WTC11 (cell line): ENCODE measurements at regions of chr18 and their contacts with region 1.

Region 1: GRCh38 chr18:7566567-7567473 is at the start of gene PTPRM:
- DNase-seq: peak; percentile 67
- ATAC-seq: peak; percentile 81
- H3K4me3 Mint-ChIP-seq: peak within 1 kb of the TSS; percentile 71
- H3K27ac Mint-ChIP-seq: no peak within 1 kb of the TSS
- H3K4me1 Mint-ChIP-seq: peaks cover 14% of the 10 kb centered on the region
- H3K27me3 Mint-ChIP-seq: peaks cover 41% of the 10 kb centered on the region
- CTCF ChIP-seq: peak; percentile 18; the same call in 1 of the 2 replicates
- total RNA-seq, gene PTPRM: 8.6 to 11.1 TPM (median 9.2 TPM) in 3 replicates

Region 2: GRCh38 chr18:7369006-7369405 is 197.8 kb before region 1 on chr18:
- CTCF ChIA-PET with region 1: interaction called, 17 read pairs
- POLR2A ChIA-PET with region 1: no interaction called
- DNase-seq: no peak
- ATAC-seq: no peak
- H3K4me3 Mint-ChIP-seq: no peak overlapping the region
- H3K27ac Mint-ChIP-seq: no peak overlapping the region
- H3K4me1 Mint-ChIP-seq: 0 out of 2 replicates have a peak, but pooled peaks cover 2% of the 10 kb centered on the region
- H3K27me3 Mint-ChIP-seq: no peaks in the 10 kb centered on the region
- CTCF ChIP-seq: no peak

Region 3: DNA sequence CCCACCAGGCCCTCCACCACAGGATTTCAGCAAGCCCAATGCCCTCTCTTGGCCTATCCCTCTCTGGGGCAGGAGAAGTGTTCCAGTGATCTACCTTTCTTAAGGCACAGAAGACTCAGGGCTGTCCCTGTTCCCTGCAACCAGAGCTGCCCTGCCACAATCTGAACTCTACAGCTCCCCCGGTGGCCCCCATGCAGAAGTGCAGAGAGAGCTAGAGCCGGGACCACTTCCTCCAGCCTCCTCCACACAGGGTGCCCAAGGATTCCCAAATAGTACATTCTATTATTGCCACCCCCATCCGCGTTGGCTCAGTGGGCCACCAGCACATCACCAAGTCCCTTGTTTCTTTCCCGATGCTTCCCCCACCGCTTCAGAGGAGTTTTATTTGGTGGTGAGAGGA is 114.5 kb before region 1 on chr18:
- CTCF ChIA-PET with region 1: interaction called, 13 read pairs
- POLR2A ChIA-PET with region 1: no interaction called
- DNase-seq: peak; percentile 61
- ATAC-seq: peak; percentile 100
- H3K4me3 Mint-ChIP-seq: no peak overlapping the region
- H3K27ac Mint-ChIP-seq: no peak overlapping the region
- H3K4me1 Mint-ChIP-seq: no peaks in the 10 kb centered on the region
- H3K27me3 Mint-ChIP-seq: no peaks in the 10 kb centered on the region; the same call in 1 of the 2 replicates
- CTCF ChIP-seq: peak; percentile 67

Region 4: GRCh38 chr18:7459851-7460770 is 106.7 kb before region 1 on chr18:
- CTCF ChIA-PET with region 1: interaction called, 10 read pairs
- POLR2A ChIA-PET with region 1: no interaction called
- DNase-seq: no peak
- ATAC-seq: peak; percentile 50
- H3K4me3 Mint-ChIP-seq: no peak overlapping the region
- H3K27ac Mint-ChIP-seq: no peak overlapping the region
- H3K4me1 Mint-ChIP-seq: peaks cover 14% of the 10 kb centered on the region
- H3K27me3 Mint-ChIP-seq: no peaks in the 10 kb centered on the region
- CTCF ChIP-seq: no peak

Region 5: DNA sequence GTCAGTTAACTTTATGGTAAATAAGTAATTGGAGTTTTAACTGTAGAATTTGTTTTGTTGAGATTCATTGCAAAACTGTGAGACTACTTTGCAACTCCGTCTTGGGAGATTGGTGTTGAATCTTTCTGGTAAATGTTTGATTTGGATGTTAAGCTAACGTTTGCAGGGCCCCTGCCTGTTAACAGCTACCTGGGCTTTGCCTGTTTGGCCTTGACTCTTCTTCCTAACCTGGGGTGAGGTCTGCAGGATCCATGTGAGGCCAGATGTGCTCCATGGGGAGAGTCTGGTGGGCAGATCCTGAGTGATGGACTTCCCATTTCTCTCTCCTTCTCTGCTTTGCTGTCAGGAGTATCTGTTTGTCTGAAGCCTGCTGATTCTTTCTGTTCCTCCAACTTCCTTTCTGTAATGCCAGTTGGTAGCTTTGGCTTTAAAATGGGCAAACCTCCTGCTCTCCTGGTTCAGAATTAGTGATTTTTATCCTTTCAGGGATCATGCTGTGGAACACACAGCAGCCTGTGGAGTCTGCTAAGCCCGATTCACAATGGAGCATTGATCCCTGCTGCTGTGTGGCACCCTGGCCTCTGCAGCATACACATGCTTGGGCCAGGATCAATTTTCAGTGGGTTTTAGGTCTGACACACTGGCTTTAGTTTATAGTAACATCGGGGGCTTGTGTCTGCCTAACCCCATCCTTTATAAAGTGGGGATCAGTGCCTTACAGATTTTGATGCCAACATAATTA is 36.6 kb after region 1 on chr18:
- CTCF ChIA-PET with region 1: interaction called, 16 read pairs
- POLR2A ChIA-PET with region 1: no interaction called
- DNase-seq: no peak
- ATAC-seq: peak; percentile 33; the same call in 1 of the 2 replicates
- H3K4me3 Mint-ChIP-seq: no peak overlapping the region
- H3K27ac Mint-ChIP-seq: peak overlapping the region; percentile 88
- H3K4me1 Mint-ChIP-seq: peaks cover 76% of the 10 kb centered on the region
- H3K27me3 Mint-ChIP-seq: no peaks in the 10 kb centered on the region
- CTCF ChIP-seq: no peak

Region 6: GRCh38 chr18:7684976-7685375 is 118.2 kb after region 1 on chr18:
- CTCF ChIA-PET with region 1: no interaction called
- POLR2A ChIA-PET with region 1: no interaction called
- DNase-seq: no peak
- ATAC-seq: no peak
- H3K4me3 Mint-ChIP-seq: no peak overlapping the region
- H3K27ac Mint-ChIP-seq: no peak overlapping the region
- H3K4me1 Mint-ChIP-seq: peaks cover 30% of the 10 kb centered on the region
- H3K27me3 Mint-ChIP-seq: no peaks in the 10 kb centered on the region
- CTCF ChIP-seq: no peak